ENCODE measurements at regions of chr18 and their contacts with region 1.

Region 1: GRCh38 chr18:42114310-42114943 is 159.4 kb downstream of the PIK3C3 start:
- DNase-seq: peak; percentile 74
- ATAC-seq: peak; percentile 79
- H3K4me3 Mint-ChIP-seq: no peak overlapping the region
- H3K27ac Mint-ChIP-seq: peak overlapping the region; percentile 34
- H3K4me1 Mint-ChIP-seq: peaks cover 8% of the 10 kb centered on the region
- H3K27me3 Mint-ChIP-seq: peaks cover 5% of the 10 kb centered on the region
- CTCF ChIP-seq: peak; percentile 79

Region 2: DNA sequence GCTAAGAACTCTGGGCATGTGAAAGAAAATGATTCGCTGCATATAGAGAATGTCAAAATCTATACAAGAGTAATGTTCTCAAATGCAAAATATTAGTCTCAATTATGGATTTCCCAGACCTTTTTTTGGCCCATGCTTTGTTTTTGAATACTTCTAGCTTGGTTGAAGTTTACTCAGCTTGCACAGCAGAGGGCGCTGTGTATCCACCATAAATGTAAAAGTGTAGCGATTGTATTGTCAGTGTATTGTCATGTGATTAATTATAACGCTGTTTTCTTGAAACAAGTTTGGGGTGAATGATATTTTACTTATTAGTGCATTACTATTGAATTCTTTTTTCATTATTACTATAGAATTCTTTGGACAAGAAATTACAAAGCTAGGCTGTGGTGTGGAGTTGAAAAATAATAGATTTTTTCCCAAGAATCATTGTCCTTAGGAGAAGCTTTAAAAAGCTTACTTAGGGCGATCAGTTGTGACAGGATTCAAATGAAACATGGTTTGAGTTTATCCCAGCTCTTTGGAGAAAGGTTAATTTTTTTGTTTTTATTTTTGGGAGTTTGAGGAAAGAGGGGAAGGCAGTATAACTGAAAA is 61.1 kb before region 1 on chr18:
- CTCF ChIA-PET with region 1: interaction called, 31 read pairs
- POLR2A ChIA-PET with region 1: no interaction called
- intact Hi-C with region 1: no loop called
- DNase-seq: peak; percentile 58
- ATAC-seq: peak; percentile 84
- H3K4me3 Mint-ChIP-seq: no peak overlapping the region
- H3K27ac Mint-ChIP-seq: no peak overlapping the region
- H3K4me1 Mint-ChIP-seq: peaks cover 8% of the 10 kb centered on the region
- H3K27me3 Mint-ChIP-seq: no peaks in the 10 kb centered on the region
- CTCF ChIP-seq: peak; percentile 96

Region 3: DNA sequence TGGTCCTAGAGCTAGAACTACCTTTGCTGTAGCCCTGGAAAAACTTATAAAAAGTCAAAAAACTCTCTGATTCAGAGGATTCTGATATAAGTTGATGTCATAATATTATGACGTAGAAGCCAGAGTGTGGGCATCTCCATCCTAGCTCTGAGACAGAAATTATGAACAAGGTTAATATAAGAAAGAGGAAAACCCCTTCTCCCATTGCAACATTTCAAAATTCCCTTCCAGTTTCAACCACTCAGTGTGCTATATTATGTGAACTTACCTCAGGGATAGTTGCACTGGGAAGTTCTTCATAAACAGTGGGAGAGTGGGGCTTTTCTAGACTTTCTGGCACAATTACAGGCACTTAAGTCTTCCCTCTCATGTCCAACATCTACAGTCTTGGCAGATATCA is 12.2 kb after region 1 on chr18:
- CTCF ChIA-PET with region 1: interaction called, 24 read pairs
- POLR2A ChIA-PET with region 1: no interaction called
- intact Hi-C with region 1: no loop called
- DNase-seq: no peak
- ATAC-seq: no peak
- H3K4me3 Mint-ChIP-seq: no peak overlapping the region
- H3K27ac Mint-ChIP-seq: no peak overlapping the region
- H3K4me1 Mint-ChIP-seq: no peaks in the 10 kb centered on the region
- H3K27me3 Mint-ChIP-seq: no peaks in the 10 kb centered on the region
- CTCF ChIP-seq: no peak

Region 4: DNA sequence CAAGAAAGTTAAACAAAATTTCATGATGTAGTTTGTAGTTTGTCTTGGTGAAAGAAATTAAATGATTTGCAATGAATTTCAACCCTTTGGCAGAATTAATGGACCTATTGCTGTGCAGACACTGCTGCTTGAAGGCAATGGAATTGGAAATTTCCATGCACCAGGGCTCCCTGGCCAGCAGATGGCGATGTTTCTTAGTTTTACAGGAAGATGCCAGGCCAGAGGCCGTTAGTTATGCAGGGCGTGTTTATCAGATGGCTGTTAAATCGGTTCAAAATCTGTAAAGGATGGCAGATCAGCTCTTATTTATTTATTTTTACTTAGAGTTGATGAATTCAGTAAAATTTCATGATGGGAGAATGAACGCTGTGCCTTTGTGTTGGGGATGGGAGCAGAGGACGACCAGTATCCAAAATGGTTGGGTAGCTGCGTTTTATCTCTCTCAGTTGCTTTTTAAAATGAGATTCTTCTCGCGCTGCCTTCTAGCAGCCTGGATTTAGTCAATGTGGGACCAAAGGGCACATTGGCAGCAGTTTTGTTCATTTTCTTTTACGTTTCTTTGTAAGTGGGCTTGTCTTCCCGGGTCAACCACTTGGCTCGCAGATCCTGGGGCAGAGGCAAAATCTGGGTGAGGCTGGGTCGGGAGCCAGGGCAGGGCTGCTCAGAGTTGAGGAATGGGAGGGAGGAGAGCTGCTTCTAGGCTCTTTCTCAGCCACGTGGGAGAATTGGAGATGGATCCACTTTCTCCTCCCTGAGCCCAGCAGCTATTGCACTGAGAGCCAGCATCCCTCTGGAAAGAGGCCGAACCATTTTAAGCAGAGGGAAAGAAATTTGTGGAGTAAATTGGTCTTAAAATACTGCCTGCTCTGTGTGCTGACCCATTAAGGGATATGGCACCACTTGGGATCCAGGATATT is 184.6 kb after region 1 on chr18:
- CTCF ChIA-PET with region 1: interaction called, 31 read pairs
- POLR2A ChIA-PET with region 1: no interaction called
- intact Hi-C with region 1: no loop called
- DNase-seq: peak; percentile 77
- ATAC-seq: peak; percentile 58
- H3K4me3 Mint-ChIP-seq: no peak overlapping the region
- H3K27ac Mint-ChIP-seq: no peak overlapping the region
- H3K4me1 Mint-ChIP-seq: no peaks in the 10 kb centered on the region
- H3K27me3 Mint-ChIP-seq: peaks cover 3% of the 10 kb centered on the region
- CTCF ChIP-seq: peak; percentile 76

Region 5: DNA sequence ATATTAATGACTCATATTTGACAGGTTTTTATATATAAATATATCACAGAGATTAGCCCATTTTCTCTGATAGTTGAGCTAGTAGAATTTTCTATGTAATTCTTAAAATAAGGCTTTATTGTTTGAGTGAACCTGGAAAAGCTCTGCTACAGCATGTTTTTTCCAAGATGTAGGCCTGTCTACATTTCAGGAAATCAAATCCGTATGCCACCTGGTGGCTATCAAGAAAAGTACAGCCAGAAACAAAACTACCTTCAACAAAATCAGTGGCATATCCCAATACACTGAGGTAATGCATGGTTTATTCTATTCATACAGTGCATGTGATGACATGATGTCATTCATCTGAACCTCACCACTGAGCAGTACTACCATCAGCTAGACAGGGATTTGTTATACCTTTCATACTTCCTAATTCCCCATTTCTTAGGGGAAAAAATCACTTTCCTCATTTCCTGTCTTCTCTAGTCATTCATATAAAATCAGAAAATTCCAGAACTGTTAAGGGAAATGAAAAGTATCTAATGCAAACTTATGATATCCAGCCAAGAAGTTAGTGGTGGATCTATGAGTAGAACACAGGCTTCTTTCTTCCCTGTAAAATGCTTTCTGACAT is 1473.2 kb after region 1 on chr18:
- CTCF ChIA-PET with region 1: interaction called, 20 read pairs
- POLR2A ChIA-PET with region 1: no interaction called
- intact Hi-C with region 1: no loop called
- DNase-seq: no peak
- ATAC-seq: no peak
- H3K4me3 Mint-ChIP-seq: no peak overlapping the region
- H3K27ac Mint-ChIP-seq: no peak overlapping the region
- H3K4me1 Mint-ChIP-seq: no peaks in the 10 kb centered on the region
- H3K27me3 Mint-ChIP-seq: no peaks in the 10 kb centered on the region
- CTCF ChIP-seq: peak; percentile 77

Measured in activated CD8-positive, alpha-beta T cell treated with anti-CD3 and anti-CD28 coated beads for 36 hours (primary cell).